Endothelial cell of umbilical vein (primary cell): ENCODE measurements at regions of chr22 and their contacts with region 1.

Region 1: DNA sequence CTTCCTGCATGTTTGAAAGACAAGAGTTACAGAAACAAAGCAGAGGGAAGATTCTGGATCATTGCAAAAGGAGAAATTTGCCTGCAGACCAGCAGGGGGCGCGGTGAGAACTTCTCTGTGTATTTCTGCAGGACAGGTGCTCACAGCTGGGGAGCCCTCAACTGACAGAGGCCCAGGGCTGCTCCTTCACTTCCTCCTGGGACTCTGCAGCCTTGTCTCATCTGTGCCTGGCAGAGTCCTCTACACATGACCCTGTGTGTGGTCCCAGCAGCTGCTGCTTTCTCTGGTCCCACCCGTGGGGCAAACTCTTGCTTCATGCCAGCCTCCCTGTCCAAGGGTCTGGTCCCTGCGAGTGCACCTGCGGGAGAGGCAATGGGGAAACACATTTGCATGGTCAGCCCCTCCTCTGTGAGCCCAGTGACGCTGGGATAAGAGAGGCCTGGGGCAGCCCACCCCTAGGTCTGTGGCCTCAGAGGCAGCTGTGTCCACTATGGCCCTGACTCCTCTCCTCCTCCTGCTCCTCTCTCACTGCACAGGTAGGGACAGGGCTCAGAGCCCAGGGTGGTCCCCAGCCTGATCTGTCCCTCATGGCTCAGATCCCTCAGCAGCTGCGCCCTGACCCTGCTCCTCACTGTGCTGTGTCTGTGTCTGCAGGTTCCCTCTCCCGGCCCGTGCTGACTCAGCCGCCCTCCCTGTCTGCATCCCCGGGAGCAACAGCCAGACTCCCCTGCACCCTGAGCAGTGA is 43.2 kb upstream of the VPREB1 start:
- DNase-seq: peak; percentile 15
- H3K4me3 ChIP-seq: no peak overlapping the region
- H3K27ac ChIP-seq: no peak overlapping the region
- H3K4me1 ChIP-seq: no peaks in the 10 kb centered on the region
- H3K27me3 ChIP-seq: peaks cover 4 to 16% of the 10 kb centered on the region in 2 experiments
- CTCF ChIP-seq: peak; percentile 57 to 68
- POLR2A ChIP-seq: no peak

Region 2: DNA sequence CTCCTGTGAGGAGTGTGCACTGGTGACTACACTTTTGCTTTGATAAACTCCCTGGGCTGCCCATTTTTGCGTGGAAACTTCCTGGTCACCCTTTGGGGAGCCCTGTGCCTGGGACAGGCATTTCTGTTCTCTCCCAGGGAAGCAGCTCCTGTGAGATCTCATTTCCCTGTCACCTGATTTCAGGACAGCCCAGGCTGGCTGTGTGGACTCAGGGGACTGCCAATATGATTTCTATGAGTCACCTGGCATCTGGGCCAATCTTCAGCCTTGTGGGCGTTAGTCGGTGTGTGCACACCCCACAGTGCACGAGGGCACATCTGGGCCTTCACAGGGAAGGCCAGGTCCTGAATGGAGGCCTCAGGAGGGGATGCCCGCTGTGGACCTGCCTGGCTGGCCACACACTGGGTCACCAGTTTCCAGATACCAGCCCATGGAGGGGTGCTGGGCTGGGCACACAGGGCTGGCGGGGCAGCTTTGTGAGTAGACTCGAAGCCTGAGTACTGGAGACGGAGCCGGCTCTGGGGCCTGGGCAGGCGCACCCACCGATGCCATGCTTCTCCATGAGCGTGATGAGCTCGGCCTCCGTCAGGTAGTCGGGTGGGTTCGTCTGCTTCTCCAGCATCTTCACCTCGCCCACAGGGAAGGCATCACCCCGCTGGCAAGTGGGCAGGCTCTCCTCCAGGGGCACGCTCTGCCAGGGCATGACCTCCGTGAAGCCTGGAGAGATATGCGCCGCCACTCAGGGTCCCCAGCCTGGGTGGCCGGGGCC is 239.3 kb before region 1 on chr22:
- CTCF ChIA-PET with region 1: no interaction called
- POLR2A ChIA-PET with region 1: no interaction called
- dilution Hi-C with region 1: no loop called
- intact Hi-C with region 1: no loop called
- DNase-seq: no peak
- H3K4me3 ChIP-seq: no peak overlapping the region
- H3K27ac ChIP-seq: no peak overlapping the region
- H3K4me1 ChIP-seq: no peaks in the 10 kb centered on the region
- H3K27me3 ChIP-seq: no peaks in the 10 kb centered on the region
- CTCF ChIP-seq: no peak
- POLR2A ChIP-seq: no peak

Region 3: GRCh38 chr22:22181341-22181850 is 20.0 kb before region 1 on chr22:
- CTCF ChIA-PET with region 1: interaction called, 66 read pairs
- POLR2A ChIA-PET with region 1: no interaction called
- dilution Hi-C with region 1: no loop called
- intact Hi-C with region 1: no loop called
- DNase-seq: no peak
- H3K4me3 ChIP-seq: no peak overlapping the region
- H3K27ac ChIP-seq: no peak overlapping the region
- H3K4me1 ChIP-seq: no peaks in the 10 kb centered on the region
- H3K27me3 ChIP-seq: peaks cover 6 to 40% of the 10 kb centered on the region in 2 experiments
- CTCF ChIP-seq: no peak
- POLR2A ChIP-seq: no peak

Region 4: DNA sequence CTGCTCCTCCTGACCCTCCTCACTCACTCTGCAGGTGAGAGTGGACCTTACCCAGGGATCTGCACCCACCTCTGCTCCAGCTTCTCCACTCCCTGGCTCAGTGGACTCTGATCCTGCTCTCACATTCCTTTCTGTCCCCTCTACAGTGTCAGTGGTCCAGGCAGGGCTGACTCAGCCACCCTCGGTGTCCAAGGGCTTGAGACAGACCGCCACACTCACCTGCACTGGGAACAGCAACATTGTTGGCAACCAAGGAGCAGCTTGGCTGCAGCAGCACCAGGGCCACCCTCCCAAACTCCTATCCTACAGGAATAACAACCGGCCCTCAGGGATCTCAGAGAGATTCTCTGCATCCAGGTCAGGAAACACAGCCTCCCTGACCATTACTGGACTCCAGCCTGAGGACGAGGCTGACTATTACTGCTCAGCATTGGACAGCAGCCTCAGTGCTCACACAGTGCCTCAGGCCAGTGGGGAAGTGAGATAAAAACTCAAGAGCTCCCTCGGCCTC is 13.5 kb after region 1 on chr22:
- CTCF ChIA-PET with region 1: interaction called, 17 read pairs
- POLR2A ChIA-PET with region 1: no interaction called
- dilution Hi-C with region 1: no loop called
- intact Hi-C with region 1: no loop called
- DNase-seq: no peak
- H3K4me3 ChIP-seq: no peak overlapping the region
- H3K27ac ChIP-seq: no peak overlapping the region
- H3K4me1 ChIP-seq: peaks cover 9% of the 10 kb centered on the region
- H3K27me3 ChIP-seq: peaks cover 7 to 12% of the 10 kb centered on the region in 2 experiments
- CTCF ChIP-seq: no peak
- POLR2A ChIP-seq: no peak

Region 5: GRCh38 chr22:22235558-22235957 is 34.2 kb after region 1 on chr22:
- CTCF ChIA-PET with region 1: interaction called, 53 read pairs
- POLR2A ChIA-PET with region 1: no interaction called
- dilution Hi-C with region 1: no loop called
- intact Hi-C with region 1: no loop called
- DNase-seq: peak; percentile 22
- H3K4me3 ChIP-seq: no peak overlapping the region
- H3K27ac ChIP-seq: no peak overlapping the region
- H3K4me1 ChIP-seq: peaks cover 4% of the 10 kb centered on the region
- H3K27me3 ChIP-seq: no peaks in the 10 kb centered on the region
- CTCF ChIP-seq: peak; percentile 49 to 51
- POLR2A ChIP-seq: no peak